Right ventricle myocardium superior (tissue), 1 donor: ENCODE measurements at regions of chr16 and their contacts with region 1.

Region 1: DNA sequence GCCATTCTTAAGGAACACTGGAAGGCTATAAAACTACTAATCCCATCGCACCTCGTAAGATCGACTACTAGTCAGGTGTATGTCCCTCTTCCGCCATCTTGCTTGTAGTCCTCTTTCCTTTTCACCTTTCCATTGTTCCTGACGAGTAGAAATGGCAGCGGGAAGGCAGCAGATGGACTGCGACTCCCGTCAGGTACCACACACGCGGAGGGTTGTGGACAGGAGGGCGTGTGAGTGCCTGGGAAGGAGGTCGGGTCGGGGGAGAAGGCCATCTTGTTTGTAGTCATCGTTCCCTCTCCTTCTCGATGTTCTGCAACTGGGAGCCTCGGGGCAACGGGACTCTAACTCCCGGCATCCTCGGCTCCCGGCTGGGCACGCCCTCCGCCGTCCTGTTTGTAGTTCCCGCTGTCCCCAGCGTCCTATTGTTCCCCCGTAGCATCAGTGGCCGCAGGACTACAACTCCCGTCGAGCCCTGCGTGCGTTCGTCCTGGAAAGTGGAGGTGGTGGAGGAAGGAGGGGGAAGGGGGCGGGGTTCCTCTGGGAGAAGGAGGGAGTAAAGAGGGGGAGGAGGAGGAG is 324 bp upstream of the FBXL19 start:
- DNase-seq: peak; percentile 100
- ATAC-seq: peak; percentile 83

Region 2: GRCh38 chr16:29805378-29806098 is 1117.5 kb before region 1 on chr16:
- intact Hi-C with region 1: loop called (anchors 10 kb)
- DNase-seq: peak; percentile 99
- ATAC-seq: peak; percentile 90

Region 3: DNA sequence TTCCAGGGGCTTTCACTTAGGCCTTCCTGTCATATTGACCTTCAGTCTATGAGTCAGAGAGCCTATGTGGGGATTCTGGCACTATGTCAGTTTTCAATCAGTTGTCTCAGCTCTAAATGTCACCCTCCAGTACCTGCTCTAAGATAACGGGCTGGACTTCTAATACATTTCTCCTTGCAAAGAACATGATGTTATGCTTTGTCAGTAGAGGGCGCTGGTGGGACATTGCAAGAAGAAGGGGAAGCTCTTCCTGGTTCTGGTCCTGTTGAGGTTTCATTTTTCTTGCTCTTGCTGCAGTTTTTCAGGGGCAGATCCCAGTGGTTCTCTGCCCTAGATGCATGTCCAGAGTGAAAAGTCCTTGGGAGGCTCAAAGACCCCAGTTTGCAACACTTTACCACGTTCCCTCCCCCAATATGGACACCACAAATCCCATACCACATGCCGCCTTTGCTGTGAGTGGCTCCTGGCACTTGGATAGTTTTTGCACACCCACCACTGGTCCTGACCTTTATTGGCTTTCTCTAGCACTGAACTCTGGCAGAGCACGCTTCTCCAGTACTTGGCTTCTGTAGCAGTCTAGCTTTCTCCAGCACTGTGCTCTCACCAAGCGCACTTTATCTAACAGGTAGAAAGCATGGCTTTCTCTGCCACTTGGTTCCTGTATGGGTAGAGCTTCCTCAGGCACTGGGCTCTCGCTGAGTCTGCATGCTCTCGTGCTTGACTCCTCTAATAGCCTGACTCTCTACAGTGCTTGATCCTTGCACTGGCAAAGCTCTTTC is 78.2 kb before region 1 on chr16:
- intact Hi-C with region 1: loop called (anchors 2 kb)
- DNase-seq: no peak
- ATAC-seq: peak; percentile 93